ENCODE measurements at regions of chr15 and their contacts with region 1.

Region 1: GRCh38 chr15:53247041-53247708 is 457.0 kb upstream of the ONECUT1 start:
- DNase-seq: no peak
- H3K4me3 ChIP-seq: no peak overlapping the region
- H3K27ac ChIP-seq: no peak overlapping the region
- H3K4me1 ChIP-seq: no peaks in the 10 kb centered on the region
- H3K27me3 ChIP-seq: no peaks in the 10 kb centered on the region
- CTCF ChIP-seq: no peak
- POLR2A ChIP-seq: no peak

Region 2: DNA sequence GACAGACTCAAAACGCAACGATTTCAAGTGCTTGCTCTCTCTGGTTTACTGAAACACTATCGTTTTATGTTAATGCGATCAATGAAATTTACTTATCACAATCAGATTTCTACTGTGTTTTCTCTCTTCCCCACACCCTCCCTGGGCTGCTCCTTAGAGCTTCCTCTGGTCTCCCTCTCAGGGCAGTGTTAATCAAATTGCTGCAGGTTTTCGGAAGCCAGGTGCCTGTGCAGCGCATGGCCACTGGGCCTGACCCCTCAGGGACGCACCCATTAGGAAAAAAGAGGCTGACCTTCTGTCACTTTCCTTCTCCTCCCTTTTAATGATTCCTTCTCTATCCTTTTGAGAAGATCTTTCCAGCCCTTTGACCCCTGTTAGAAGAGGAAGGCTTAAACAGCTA is 322.5 kb before region 1 on chr15:
- intact Hi-C with region 1: loop called (anchors 5 kb)
- DNase-seq: no peak
- H3K4me3 ChIP-seq: no peak overlapping the region
- H3K27ac ChIP-seq: no peak overlapping the region
- H3K4me1 ChIP-seq: no peaks in the 10 kb centered on the region
- H3K27me3 ChIP-seq: no peaks in the 10 kb centered on the region
- CTCF ChIP-seq: no peak
- POLR2A ChIP-seq: no peak

Region 3: GRCh38 chr15:53160092-53160704 is 87.0 kb before region 1 on chr15:
- intact Hi-C with region 1: no loop called
- DNase-seq: no peak
- H3K4me3 ChIP-seq: no peak overlapping the region
- H3K27ac ChIP-seq: no peak overlapping the region
- H3K4me1 ChIP-seq: no peaks in the 10 kb centered on the region
- H3K27me3 ChIP-seq: no peaks in the 10 kb centered on the region
- CTCF ChIP-seq: no peak
- POLR2A ChIP-seq: no peak

Region 4: GRCh38 chr15:53197426-53197839 is 49.7 kb before region 1 on chr15:
- intact Hi-C with region 1: no loop called
- DNase-seq: peak; percentile 32
- H3K4me3 ChIP-seq: no peak overlapping the region
- H3K27ac ChIP-seq: no peak overlapping the region
- H3K4me1 ChIP-seq: no peaks in the 10 kb centered on the region
- H3K27me3 ChIP-seq: no peaks in the 10 kb centered on the region
- CTCF ChIP-seq: peak in 3 of 4 experiments; percentile 47 to 55 (median 52)
- POLR2A ChIP-seq: no peak

Region 5: GRCh38 chr15:53530761-53531160 is 283.6 kb after region 1 on chr15:
- intact Hi-C with region 1: no loop called
- DNase-seq: no peak
- H3K4me3 ChIP-seq: no peak overlapping the region
- H3K27ac ChIP-seq: no peak overlapping the region
- H3K4me1 ChIP-seq: no peaks in the 10 kb centered on the region
- H3K27me3 ChIP-seq: no peaks in the 10 kb centered on the region
- CTCF ChIP-seq: no peak
- POLR2A ChIP-seq: no peak

Measured in prostate gland (tissue), 2 donors.